ENCODE measurements at regions of chr4 and their contacts with region 1.

Region 1: DNA sequence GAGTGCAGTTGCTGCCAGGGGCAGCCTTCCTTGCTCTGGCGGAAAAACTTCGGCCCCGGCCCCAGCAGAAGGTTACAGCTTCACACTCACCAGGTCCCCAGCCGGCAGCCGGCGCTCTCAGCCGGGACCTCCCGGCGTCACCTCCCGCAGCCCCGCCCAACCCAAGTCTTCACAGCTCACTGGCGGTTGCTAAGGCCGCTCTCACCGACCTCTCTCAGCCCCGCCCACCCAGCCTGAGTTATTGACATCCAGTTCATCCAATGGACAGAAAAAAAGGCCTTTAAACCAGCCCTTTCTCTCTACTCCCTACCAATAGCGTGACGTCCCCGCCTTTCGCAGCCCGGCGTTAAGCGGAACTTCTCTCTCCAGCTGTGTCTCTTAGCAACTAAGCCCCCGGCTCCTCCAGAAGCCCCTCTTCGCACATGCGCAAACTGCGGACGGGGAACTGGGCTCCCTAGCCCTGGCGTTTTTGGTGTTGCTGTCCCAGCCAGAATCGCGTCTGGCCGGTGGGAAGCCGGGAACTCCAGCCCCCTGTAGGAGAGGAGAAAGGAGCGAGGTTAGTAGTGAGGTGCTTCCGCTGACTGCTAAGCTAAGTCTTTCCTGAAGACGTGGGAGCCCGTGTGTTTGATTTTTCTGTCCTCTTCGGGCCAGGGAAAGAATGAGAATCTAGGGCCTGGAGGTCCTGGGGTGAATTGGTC is at the start of gene BBS12:
- DNase-seq: peak; percentile 98
- H3K4me3 Mint-ChIP-seq: peak within 1 kb of the TSS; percentile 94
- H3K27ac Mint-ChIP-seq: peak within 1 kb of the TSS; percentile 95
- H3K4me1 Mint-ChIP-seq: peaks cover 37% of the 10 kb centered on the region
- H3K27me3 Mint-ChIP-seq: no peaks in the 10 kb centered on the region
- total RNA-seq, gene BBS12: 4.4 and 6.2 TPM in 2 replicates

Region 2: DNA sequence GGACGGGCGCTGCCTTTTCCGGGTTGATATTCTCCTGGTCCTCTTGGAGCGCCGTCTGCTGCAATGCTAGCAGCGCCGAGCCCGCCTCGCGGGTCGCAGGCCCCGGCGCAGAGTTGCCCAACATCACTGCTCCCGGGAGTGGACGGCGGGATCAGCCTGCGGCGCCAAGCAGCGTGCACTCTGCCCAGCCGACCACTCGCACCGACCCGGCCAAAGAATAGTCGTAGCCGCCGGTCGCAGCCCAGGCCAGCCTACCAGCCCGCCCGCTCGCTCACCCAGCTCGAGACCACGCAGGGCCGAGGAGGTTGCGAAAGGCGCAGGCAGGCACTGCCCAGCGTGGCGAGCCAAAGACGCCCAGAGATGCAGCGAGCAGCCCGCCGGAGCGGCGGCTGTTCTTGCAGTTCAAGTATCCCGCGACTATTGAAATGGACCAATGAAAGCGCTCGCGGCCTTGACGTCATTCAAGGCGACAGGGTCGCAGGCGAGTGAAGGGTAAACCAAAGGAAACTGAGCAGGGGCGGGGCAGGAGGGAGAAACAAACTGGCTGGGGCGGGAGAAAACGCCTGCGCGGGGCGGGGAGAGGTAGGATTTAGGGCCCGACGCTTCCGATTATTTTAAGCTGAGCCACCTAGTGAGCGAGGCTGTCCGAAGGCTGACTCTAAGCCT is 908.8 kb before region 1 on chr4 and contains the start of gene CCNA2:
- intact Hi-C with region 1: loop called (anchors 5 kb)
- DNase-seq: peak; percentile 95
- H3K4me3 Mint-ChIP-seq: peak within 1 kb of the TSS; percentile 94
- H3K27ac Mint-ChIP-seq: peak within 1 kb of the TSS; percentile 91
- H3K4me1 Mint-ChIP-seq: peaks cover 45% of the 10 kb centered on the region
- H3K27me3 Mint-ChIP-seq: no peaks in the 10 kb centered on the region
- total RNA-seq, gene CCNA2: 59.9 and 64.3 TPM in 2 replicates

Region 3: GRCh38 chr4:121900132-121900983 is 832.1 kb before region 1 on chr4:
- intact Hi-C with region 1: loop called (anchors 5 kb)
- DNase-seq: peak; percentile 24
- H3K4me3 Mint-ChIP-seq: no peak overlapping the region
- H3K27ac Mint-ChIP-seq: no peak overlapping the region
- H3K4me1 Mint-ChIP-seq: peaks cover 6% of the 10 kb centered on the region
- H3K27me3 Mint-ChIP-seq: peaks cover 7% of the 10 kb centered on the region

Region 4: GRCh38 chr4:122469457-122469856 is 263.0 kb before region 1 on chr4:
- intact Hi-C with region 1: no loop called
- DNase-seq: no peak
- H3K4me3 Mint-ChIP-seq: no peak overlapping the region
- H3K27ac Mint-ChIP-seq: no peak overlapping the region
- H3K4me1 Mint-ChIP-seq: no peaks in the 10 kb centered on the region
- H3K27me3 Mint-ChIP-seq: no peaks in the 10 kb centered on the region

Region 5: GRCh38 chr4:122658818-122659295 is 73.6 kb before region 1 on chr4:
- intact Hi-C with region 1: loop called (anchors 1 kb)
- DNase-seq: no peak
- H3K4me3 Mint-ChIP-seq: peak overlapping the region; percentile 66
- H3K27ac Mint-ChIP-seq: peak overlapping the region; percentile 94
- H3K4me1 Mint-ChIP-seq: peaks cover 59% of the 10 kb centered on the region
- H3K27me3 Mint-ChIP-seq: no peaks in the 10 kb centered on the region

Region 6: DNA sequence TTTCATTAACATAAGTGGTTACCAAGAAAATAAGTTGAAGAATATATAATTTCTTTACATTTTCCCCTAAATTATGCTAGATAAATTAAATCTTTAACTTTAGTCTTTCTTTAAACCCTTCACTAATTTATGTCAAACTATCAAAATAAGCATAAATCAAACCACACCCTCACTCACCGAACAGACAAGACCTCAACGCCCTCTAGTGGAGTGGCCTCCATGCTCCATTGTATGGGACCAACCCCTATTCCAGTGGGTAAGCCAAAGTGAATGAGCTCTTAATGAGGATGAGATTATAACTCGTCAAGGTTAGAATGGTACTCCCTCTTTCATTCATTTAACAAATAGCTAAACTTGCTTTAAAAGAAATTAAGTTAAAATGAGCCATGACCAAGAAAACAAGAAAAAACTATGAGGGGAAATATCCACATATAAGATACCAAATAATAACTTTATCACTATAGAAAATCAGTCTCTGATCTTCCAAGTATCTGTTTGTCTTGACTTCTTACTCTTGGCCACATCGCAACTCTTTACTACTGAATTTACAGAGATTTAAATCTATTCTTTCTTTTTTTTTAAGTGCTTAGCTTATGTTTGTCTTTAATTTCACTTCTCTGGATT is 15.5 kb before region 1 on chr4:
- intact Hi-C with region 1: loop called (anchors 1 kb)
- DNase-seq: peak; percentile 55
- H3K4me3 Mint-ChIP-seq: peak overlapping the region; percentile 25
- H3K27ac Mint-ChIP-seq: peak overlapping the region; percentile 81
- H3K4me1 Mint-ChIP-seq: peaks cover 46% of the 10 kb centered on the region
- H3K27me3 Mint-ChIP-seq: peaks cover 2% of the 10 kb centered on the region

Region 7: GRCh38 chr4:122827879-122828601 is 95.6 kb after region 1 on chr4:
- intact Hi-C with region 1: loop called (anchors 1 kb)
- DNase-seq: peak; percentile 40
- H3K4me3 Mint-ChIP-seq: peak overlapping the region; percentile 78
- H3K27ac Mint-ChIP-seq: peak overlapping the region; percentile 64
- H3K4me1 Mint-ChIP-seq: peaks cover 34% of the 10 kb centered on the region
- H3K27me3 Mint-ChIP-seq: peaks cover 39% of the 10 kb centered on the region

Region 8: DNA sequence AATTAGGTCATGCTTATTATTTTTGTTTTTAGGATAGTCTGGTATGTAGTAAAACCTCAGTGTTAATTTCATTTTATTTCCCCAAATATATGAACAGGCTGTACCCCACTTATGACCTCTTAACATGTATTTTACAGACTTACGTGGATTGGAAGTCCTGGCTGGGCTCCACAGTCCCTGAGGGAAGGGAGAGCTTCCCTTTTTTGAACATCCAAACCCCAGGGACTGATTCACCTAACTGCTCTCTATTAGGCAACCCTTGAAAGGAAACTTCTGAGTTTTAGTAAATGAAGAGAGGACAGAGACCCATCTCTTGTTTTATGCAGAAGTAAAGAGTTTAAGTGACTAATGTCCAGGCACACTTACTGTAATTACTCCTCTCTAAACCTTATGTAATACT is 431.0 kb after region 1 on chr4:
- intact Hi-C with region 1: no loop called
- DNase-seq: no peak
- H3K4me3 Mint-ChIP-seq: no peak overlapping the region
- H3K27ac Mint-ChIP-seq: no peak overlapping the region
- H3K4me1 Mint-ChIP-seq: no peaks in the 10 kb centered on the region
- H3K27me3 Mint-ChIP-seq: no peaks in the 10 kb centered on the region

Measured in activated T-helper 1 cell treated with anti-CD3 and anti-CD28 coated beads, Interleukin-12 subunit alpha, Interleukin-12 subunit beta, Interleukin-2, Interleukin-4 antibody, amounts not matched to agents 30 ng/mL and 10 ng/mL and 1 ng/mL, durations not matched to agents 14 hours and 24 hours and 36 hours (primary cell).